B cell (primary cell): ENCODE measurements at regions of chr14 and their contacts with region 1.

Region 1: GRCh38 chr14:101767618-101768362 is 6.3 kb downstream of the PPP2R5C start:
- DNase-seq: no peak
- ATAC-seq: no peak
- H3K4me3 ChIP-seq: no peak overlapping the region
- H3K4me3 Mint-ChIP-seq: no peak overlapping the region
- H3K27ac ChIP-seq: no peak overlapping the region
- H3K27ac Mint-ChIP-seq: no peak overlapping the region
- H3K4me1 ChIP-seq: peaks cover under 1 to 8% of the 10 kb centered on the region in 2 donors
- H3K4me1 Mint-ChIP-seq: peaks cover 12% of the 10 kb centered on the region
- H3K27me3 ChIP-seq: no peaks in the 10 kb centered on the region
- H3K27me3 Mint-ChIP-seq: no peaks in the 10 kb centered on the region
- CTCF ChIP-seq: no peak

Region 2: DNA sequence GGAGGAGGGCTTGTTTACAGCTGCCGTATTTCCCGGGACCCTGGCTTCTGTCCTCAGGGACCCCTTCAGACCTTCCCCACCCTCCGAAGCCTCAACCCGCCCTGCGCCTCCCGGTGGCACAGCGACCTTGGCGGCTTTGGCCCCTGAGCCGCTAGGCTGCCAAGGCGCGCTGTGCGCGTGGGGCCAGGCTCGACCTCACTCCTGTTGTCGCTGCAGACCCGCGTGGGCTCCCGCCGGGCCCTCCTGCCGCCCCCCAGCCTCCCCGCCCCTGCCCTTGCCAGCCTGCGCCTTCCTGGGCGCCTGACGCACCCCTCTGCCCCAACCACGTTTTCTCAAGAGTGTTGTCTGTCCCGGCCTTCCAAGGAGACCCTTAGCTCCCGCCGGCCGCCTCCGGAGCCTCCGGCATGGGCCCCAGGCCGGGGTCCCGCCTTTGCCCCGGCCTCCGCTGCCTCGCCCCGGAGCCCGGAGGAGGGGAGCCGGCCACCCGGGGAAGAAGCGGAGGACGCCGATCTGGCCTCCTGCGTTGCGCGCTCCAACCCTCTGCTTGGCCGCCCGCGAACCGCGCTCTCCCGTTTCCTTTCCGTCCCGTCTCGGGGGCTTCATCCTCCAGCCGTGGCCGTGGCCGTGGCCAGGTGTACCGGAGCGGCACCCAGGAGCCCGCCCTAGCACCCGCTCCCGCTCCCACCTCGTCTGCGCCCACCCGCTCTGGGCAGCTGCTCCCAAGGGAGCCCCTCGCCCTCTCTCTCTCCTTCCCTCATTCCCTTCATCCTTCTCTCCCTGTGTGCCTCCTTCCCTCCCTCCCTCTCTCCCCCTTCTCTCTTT is 13.7 kb after region 1 on chr14:
- CTCF ChIA-PET with region 1: interaction called, 12 read pairs
- POLR2A ChIA-PET with region 1: interaction called, 4 read pairs
- intact Hi-C with region 1: no loop called
- DNase-seq: peak; percentile 46
- ATAC-seq: peak; percentile 58
- H3K4me3 ChIP-seq: peak overlapping the region in 4 of 5 experiments; percentile 35 to 67 (median 60)
- H3K4me3 Mint-ChIP-seq: peak overlapping the region; percentile 79
- H3K27ac ChIP-seq: no peak overlapping the region
- H3K27ac Mint-ChIP-seq: peak overlapping the region; percentile 15
- H3K4me1 ChIP-seq: peaks cover 18 to 25% of the 10 kb centered on the region in 2 donors
- H3K4me1 Mint-ChIP-seq: peaks cover 39% of the 10 kb centered on the region
- H3K27me3 ChIP-seq: peaks cover 0 to 5% (median 2%) of the 10 kb centered on the region in 4 experiments
- H3K27me3 Mint-ChIP-seq: no peaks in the 10 kb centered on the region
- CTCF ChIP-seq: no peak

Region 3: DNA sequence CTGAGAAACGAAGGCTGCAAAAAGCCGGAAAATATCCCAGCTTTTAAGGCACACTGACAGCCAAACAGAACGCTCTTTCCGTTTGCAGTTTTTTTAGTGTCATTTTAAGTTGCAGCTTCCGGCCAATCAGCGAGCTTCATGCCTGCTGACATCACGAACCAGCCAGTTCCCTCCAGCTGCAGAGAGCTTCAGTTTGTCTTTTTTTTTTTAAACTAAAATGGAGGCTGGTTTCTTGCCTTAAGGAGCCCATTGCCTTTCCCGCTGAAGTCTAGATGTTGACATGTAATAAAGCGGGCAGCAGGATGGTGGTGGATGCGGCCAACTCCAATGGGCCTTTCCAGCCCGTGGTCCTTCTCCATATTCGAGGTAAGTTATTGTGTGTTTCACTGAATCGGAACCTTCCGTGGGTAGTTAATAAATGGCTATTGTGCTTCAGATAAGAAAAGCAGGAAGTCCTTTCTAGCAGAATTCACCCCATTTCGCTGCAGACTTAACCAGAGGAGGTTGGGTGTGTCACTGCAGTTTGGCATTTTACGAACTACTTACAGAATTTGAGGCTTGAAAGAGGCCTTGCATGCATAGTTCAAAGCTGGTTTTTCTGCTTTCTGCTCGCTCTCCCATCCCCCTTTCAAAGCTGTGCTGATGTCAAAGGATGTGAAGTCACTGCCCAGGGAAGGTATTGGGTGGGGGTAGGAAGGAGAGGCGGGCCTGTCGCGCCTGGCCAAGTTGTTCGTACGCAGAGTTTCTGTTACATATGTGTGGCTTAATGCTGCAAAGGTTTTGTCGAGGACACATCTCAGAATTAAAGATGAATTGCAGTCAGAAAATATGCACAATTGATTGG is 42.1 kb after region 1 on chr14:
- CTCF ChIA-PET with region 1: interaction called, 44 read pairs
- POLR2A ChIA-PET with region 1: no interaction called
- intact Hi-C with region 1: loop called (anchors 2 kb)
- DNase-seq: peak; percentile 93
- ATAC-seq: peak; percentile 93
- H3K4me3 ChIP-seq: peak overlapping the region; percentile 80 to 100 (median 97)
- H3K4me3 Mint-ChIP-seq: peak overlapping the region; percentile 92
- H3K27ac ChIP-seq: peak overlapping the region; percentile 95 to 100
- H3K27ac Mint-ChIP-seq: peak overlapping the region; percentile 98
- H3K4me1 ChIP-seq: peaks cover 39 to 43% of the 10 kb centered on the region in 2 donors
- H3K4me1 Mint-ChIP-seq: peaks cover 45% of the 10 kb centered on the region
- H3K27me3 ChIP-seq: no peaks in the 10 kb centered on the region
- H3K27me3 Mint-ChIP-seq: no peaks in the 10 kb centered on the region
- CTCF ChIP-seq: no peak

Region 4: GRCh38 chr14:101849125-101849524 is 81.3 kb after region 1 on chr14:
- CTCF ChIA-PET with region 1: interaction called, 190 read pairs
- POLR2A ChIA-PET with region 1: interaction called, 9 read pairs
- intact Hi-C with region 1: no loop called
- DNase-seq: peak; percentile 71
- ATAC-seq: peak; percentile 62
- H3K4me3 ChIP-seq: no peak overlapping the region
- H3K4me3 Mint-ChIP-seq: peak overlapping the region; percentile 80
- H3K27ac ChIP-seq: peak overlapping the region in 1 of 2 donors; percentile 12
- H3K27ac Mint-ChIP-seq: peak overlapping the region; percentile 11
- H3K4me1 ChIP-seq: peaks cover 68 to 72% of the 10 kb centered on the region in 2 donors
- H3K4me1 Mint-ChIP-seq: peaks cover 85% of the 10 kb centered on the region
- H3K27me3 ChIP-seq: no peaks in the 10 kb centered on the region
- H3K27me3 Mint-ChIP-seq: no peaks in the 10 kb centered on the region
- CTCF ChIP-seq: no peak

Region 5: DNA sequence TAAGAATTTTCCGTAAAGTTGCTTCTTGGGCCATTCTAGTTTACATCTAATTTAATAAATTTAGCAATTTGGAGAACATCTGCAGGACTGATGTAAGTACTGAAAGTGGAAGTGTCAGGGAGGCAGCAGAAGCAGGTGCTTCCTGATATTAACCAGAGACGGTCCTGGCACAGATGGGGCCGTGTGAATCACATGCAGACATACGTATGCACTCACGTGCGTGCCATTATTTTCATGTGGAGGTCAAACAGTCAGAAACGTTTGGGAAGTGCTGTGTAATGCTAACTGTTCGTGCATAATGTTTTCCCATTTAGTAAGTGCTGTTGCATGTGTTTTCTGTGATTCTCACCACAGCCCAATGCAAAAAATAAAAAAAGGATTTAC is 108.8 kb after region 1 on chr14:
- CTCF ChIA-PET with region 1: interaction called, 31 read pairs
- POLR2A ChIA-PET with region 1: interaction called, 8 read pairs
- intact Hi-C with region 1: loop called (anchors 2 kb)
- DNase-seq: peak; percentile 96
- ATAC-seq: peak; percentile 89
- H3K4me3 ChIP-seq: peak overlapping the region in 4 of 5 experiments; percentile 8 to 57 (median 29)
- H3K4me3 Mint-ChIP-seq: peak overlapping the region; percentile 71
- H3K27ac ChIP-seq: peak overlapping the region; percentile 94 to 96
- H3K27ac Mint-ChIP-seq: peak overlapping the region; percentile 72
- H3K4me1 ChIP-seq: peaks cover 52 to 58% of the 10 kb centered on the region in 2 donors
- H3K4me1 Mint-ChIP-seq: peaks cover 79% of the 10 kb centered on the region
- H3K27me3 ChIP-seq: no peaks in the 10 kb centered on the region
- H3K27me3 Mint-ChIP-seq: no peaks in the 10 kb centered on the region
- CTCF ChIP-seq: no peak

Region 6: GRCh38 chr14:101908795-101909194 is 141.0 kb after region 1 on chr14:
- CTCF ChIA-PET with region 1: interaction called, 13 read pairs
- POLR2A ChIA-PET with region 1: no interaction called
- intact Hi-C with region 1: no loop called
- DNase-seq: no peak
- ATAC-seq: no peak
- H3K4me3 ChIP-seq: no peak overlapping the region
- H3K4me3 Mint-ChIP-seq: no peak overlapping the region
- H3K27ac ChIP-seq: no peak overlapping the region
- H3K27ac Mint-ChIP-seq: no peak overlapping the region
- H3K4me1 ChIP-seq: no peaks in the 10 kb centered on the region
- H3K4me1 Mint-ChIP-seq: no peaks in the 10 kb centered on the region
- H3K27me3 ChIP-seq: no peaks in the 10 kb centered on the region
- H3K27me3 Mint-ChIP-seq: no peaks in the 10 kb centered on the region
- CTCF ChIP-seq: no peak

Region 7: DNA sequence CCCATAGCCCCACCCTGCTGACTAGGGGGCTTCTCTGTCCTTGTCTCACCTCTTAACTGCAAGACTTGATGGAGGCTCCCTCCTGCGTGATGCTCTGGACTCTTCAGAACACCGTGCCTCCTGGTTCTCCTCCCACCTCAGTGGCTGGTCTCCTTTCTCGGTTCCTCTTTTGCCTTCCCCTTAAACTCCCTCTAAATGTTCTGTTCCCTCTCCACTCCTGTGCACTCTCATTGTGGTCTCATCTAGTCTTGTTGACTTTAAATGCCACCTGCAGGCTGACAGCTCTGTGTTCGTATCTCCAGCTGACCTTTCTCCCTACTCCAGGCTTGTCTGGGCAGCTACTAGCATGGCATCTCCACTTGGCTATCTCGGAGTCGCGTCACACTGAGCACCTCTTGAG is 224.9 kb after region 1 on chr14:
- CTCF ChIA-PET with region 1: interaction called, 22 read pairs
- POLR2A ChIA-PET with region 1: no interaction called
- intact Hi-C with region 1: no loop called
- DNase-seq: peak; percentile 72
- ATAC-seq: peak; percentile 92
- H3K4me3 ChIP-seq: no peak overlapping the region
- H3K4me3 Mint-ChIP-seq: no peak overlapping the region
- H3K27ac ChIP-seq: peak overlapping the region in 1 of 2 donors; percentile 34
- H3K27ac Mint-ChIP-seq: peak overlapping the region; percentile 66
- H3K4me1 ChIP-seq: peaks cover 11% of the 10 kb centered on the region in 2 donors
- H3K4me1 Mint-ChIP-seq: peaks cover 17% of the 10 kb centered on the region
- H3K27me3 ChIP-seq: no peaks in the 10 kb centered on the region
- H3K27me3 Mint-ChIP-seq: no peaks in the 10 kb centered on the region
- CTCF ChIP-seq: peak; percentile 21